ENCODE measurements at regions of chr9 and their contacts with region 1.

Region 1: GRCh38 chr9:133184962-133185361 is 21.2 kb upstream of the GBGT1 start:
- DNase-seq: peak; percentile 64 to 69
- H3K4me3 ChIP-seq: no peak overlapping the region
- H3K4me3 Mint-ChIP-seq: no peak overlapping the region
- H3K27ac Mint-ChIP-seq: no peak overlapping the region
- H3K4me1 ChIP-seq: peaks cover 3% of the 10 kb centered on the region; the same call in 1 of the 2 replicates
- H3K4me1 Mint-ChIP-seq: no peaks in the 10 kb centered on the region
- H3K27me3 ChIP-seq: no peaks in the 10 kb centered on the region
- H3K27me3 Mint-ChIP-seq: peaks cover 11% of the 10 kb centered on the region
- CTCF ChIP-seq: peak; percentile 52 to 76

Region 2: GRCh38 chr9:133103183-133103986 is 81.6 kb before region 1 on chr9:
- CTCF ChIA-PET with region 1: no interaction called
- POLR2A ChIA-PET with region 1: no interaction called
- intact Hi-C with region 1: no loop called
- DNase-seq: peak in 1 of 2 experiments; percentile 76
- H3K4me3 ChIP-seq: no peak overlapping the region
- H3K4me3 Mint-ChIP-seq: no peak overlapping the region
- H3K27ac Mint-ChIP-seq: peak overlapping the region; percentile 32
- H3K4me1 ChIP-seq: no peaks in the 10 kb centered on the region
- H3K4me1 Mint-ChIP-seq: no peaks in the 10 kb centered on the region
- H3K27me3 ChIP-seq: no peaks in the 10 kb centered on the region
- H3K27me3 Mint-ChIP-seq: no peaks in the 10 kb centered on the region
- CTCF ChIP-seq: peak; percentile 91 to 93

Region 3: DNA sequence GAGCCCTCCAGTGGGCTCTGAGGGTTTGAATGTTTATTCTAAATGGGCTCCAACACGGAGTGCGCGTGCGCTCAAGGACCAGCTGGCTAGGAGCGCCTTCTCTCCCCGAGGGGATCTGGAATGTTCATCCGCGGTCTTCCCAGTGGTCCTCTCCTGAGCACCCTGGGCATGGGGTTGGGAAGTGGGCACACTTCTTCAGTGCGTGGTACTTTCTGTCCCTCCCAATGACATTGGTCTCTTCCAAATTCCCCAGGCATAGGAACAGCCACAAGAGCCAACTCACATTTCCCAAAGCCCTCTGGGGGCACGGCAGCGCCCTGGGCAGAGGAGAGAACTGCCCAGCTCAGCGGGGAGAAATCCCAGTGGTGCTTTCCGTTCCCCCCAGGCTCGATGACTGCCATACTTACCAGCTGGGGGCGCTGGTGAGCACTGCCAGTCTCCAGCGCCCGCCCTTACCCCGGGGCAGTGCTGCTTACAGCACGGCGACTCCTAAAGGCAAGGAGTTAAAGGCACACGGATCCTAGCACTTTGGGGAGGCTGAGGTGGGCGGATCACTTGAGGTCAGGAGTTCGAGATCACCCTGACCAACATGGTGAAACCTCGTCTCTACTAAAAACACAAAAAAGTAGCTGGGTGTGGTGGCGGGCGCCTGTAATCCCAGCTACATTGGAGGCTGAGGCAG is 54.0 kb after region 1 on chr9:
- CTCF ChIA-PET with region 1: interaction called, 12 read pairs
- POLR2A ChIA-PET with region 1: no interaction called
- intact Hi-C with region 1: no loop called
- DNase-seq: peak; percentile 40 to 56
- H3K4me3 ChIP-seq: no peak overlapping the region
- H3K4me3 Mint-ChIP-seq: peak overlapping the region; percentile 72
- H3K27ac Mint-ChIP-seq: no peak overlapping the region
- H3K4me1 ChIP-seq: peaks cover 13% of the 10 kb centered on the region
- H3K4me1 Mint-ChIP-seq: no peaks in the 10 kb centered on the region
- H3K27me3 ChIP-seq: no peaks in the 10 kb centered on the region
- H3K27me3 Mint-ChIP-seq: no peaks in the 10 kb centered on the region
- CTCF ChIP-seq: peak in 1 of 2 experiments; percentile 44

Region 4: GRCh38 chr9:133320421-133320881 is 135.5 kb after region 1 on chr9:
- CTCF ChIA-PET with region 1: interaction called, 24 read pairs
- POLR2A ChIA-PET with region 1: interaction called, 4 read pairs
- intact Hi-C with region 1: no loop called
- DNase-seq: no peak
- H3K4me3 ChIP-seq: no peak overlapping the region
- H3K4me3 Mint-ChIP-seq: no peak overlapping the region
- H3K27ac Mint-ChIP-seq: no peak overlapping the region
- H3K4me1 ChIP-seq: no peaks in the 10 kb centered on the region
- H3K4me1 Mint-ChIP-seq: no peaks in the 10 kb centered on the region
- H3K27me3 ChIP-seq: no peaks in the 10 kb centered on the region
- H3K27me3 Mint-ChIP-seq: no peaks in the 10 kb centered on the region
- CTCF ChIP-seq: peak in 1 of 2 experiments; percentile 13

Region 5: GRCh38 chr9:133335878-133336811 is 151.2 kb after region 1 on chr9 and contains the start of gene SURF6:
- CTCF ChIA-PET with region 1: interaction called, 31 read pairs
- POLR2A ChIA-PET with region 1: interaction called, 3 read pairs
- intact Hi-C with region 1: no loop called
- DNase-seq: peak; percentile 92 to 95
- H3K4me3 ChIP-seq: peak within 1 kb of the TSS; percentile 57
- H3K4me3 Mint-ChIP-seq: peak within 1 kb of the TSS; percentile 93
- H3K27ac Mint-ChIP-seq: peak within 1 kb of the TSS; percentile 95
- H3K4me1 ChIP-seq: peaks cover 6% of the 10 kb centered on the region; the same call in 1 of the 2 replicates
- H3K4me1 Mint-ChIP-seq: no peaks in the 10 kb centered on the region
- H3K27me3 ChIP-seq: no peaks in the 10 kb centered on the region
- H3K27me3 Mint-ChIP-seq: no peaks in the 10 kb centered on the region
- CTCF ChIP-seq: no peak
- total RNA-seq, gene SURF6: 31.6 and 32.4 TPM in 2 replicates

Region 6: GRCh38 chr9:133347985-133348717 is 163.2 kb after region 1 on chr9 and contains the starts of genes MED22 and RPL7A:
- CTCF ChIA-PET with region 1: interaction called, 7 read pairs
- POLR2A ChIA-PET with region 1: interaction called, 14 read pairs
- intact Hi-C with region 1: no loop called
- DNase-seq: peak; percentile 92 to 97
- H3K4me3 ChIP-seq: peak within 1 kb of the TSS; percentile 85
- H3K4me3 Mint-ChIP-seq: peak within 1 kb of the TSS; percentile 90
- H3K27ac Mint-ChIP-seq: peak within 1 kb of the TSS; percentile 98
- H3K4me1 ChIP-seq: peaks cover 10% of the 10 kb centered on the region
- H3K4me1 Mint-ChIP-seq: peaks cover 13% of the 10 kb centered on the region
- H3K27me3 ChIP-seq: no peaks in the 10 kb centered on the region
- H3K27me3 Mint-ChIP-seq: no peaks in the 10 kb centered on the region
- CTCF ChIP-seq: no peak
- total RNA-seq, gene MED22: 60.1 and 65.6 TPM in 2 replicates
- total RNA-seq, gene RPL7A: 1,995 and 2,182 TPM in 2 replicates

Region 7: GRCh38 chr9:133485361-133486260 is 300.6 kb after region 1 on chr9:
- CTCF ChIA-PET with region 1: interaction called, 5 read pairs
- POLR2A ChIA-PET with region 1: no interaction called
- intact Hi-C with region 1: loop called (anchors 5 kb)
- DNase-seq: no peak
- H3K4me3 ChIP-seq: no peak overlapping the region
- H3K4me3 Mint-ChIP-seq: no peak overlapping the region
- H3K27ac Mint-ChIP-seq: no peak overlapping the region
- H3K4me1 ChIP-seq: peaks cover 11% of the 10 kb centered on the region; the same call in 1 of the 2 replicates
- H3K4me1 Mint-ChIP-seq: peaks cover 7% of the 10 kb centered on the region
- H3K27me3 ChIP-seq: no peaks in the 10 kb centered on the region
- H3K27me3 Mint-ChIP-seq: peaks cover 3% of the 10 kb centered on the region
- CTCF ChIP-seq: no peak

Measured in Caco-2 (cell line).